ENCODE measurements at regions of chr19 and their contacts with region 1.

Region 1: GRCh38 chr19:5048091-5048726 is 79.3 kb downstream of the KDM4B start:
- DNase-seq: peak; percentile 96
- H3K4me3 ChIP-seq: peak overlapping the region in 1 of 2 experiments; percentile 48; a peak in 1 of 4 replicates
- H3K27ac ChIP-seq: peak overlapping the region in 1 of 2 experiments; percentile 56; a peak in 3 of 4 replicates
- H3K4me1 ChIP-seq: peaks cover 12 to 42% of the 10 kb centered on the region in 2 experiments; a peak in 3 of 4 replicates
- H3K27me3 ChIP-seq: no peaks in the 10 kb centered on the region
- CTCF ChIP-seq: peak; percentile 90
- EP300 ChIP-seq: no peak
- RAD21 ChIP-seq: peak; percentile 97

Region 2: GRCh38 chr19:4909897-4910593 is 138.2 kb before region 1 on chr19:
- CTCF ChIA-PET with region 1: no interaction called
- POLR2A ChIA-PET with region 1: no interaction called
- DNase-seq: peak; percentile 99
- H3K4me3 ChIP-seq: peak overlapping the region; percentile 62 to 82
- H3K27ac ChIP-seq: peak overlapping the region; percentile 81 to 84
- H3K4me1 ChIP-seq: peaks cover 27 to 31% of the 10 kb centered on the region in 2 experiments; a peak in 3 of 4 replicates
- H3K27me3 ChIP-seq: no peaks in the 10 kb centered on the region
- CTCF ChIP-seq: no peak
- EP300 ChIP-seq: no peak
- RAD21 ChIP-seq: no peak

Region 3: GRCh38 chr19:5086725-5087439 is 38.7 kb after region 1 on chr19:
- CTCF ChIA-PET with region 1: interaction called, 24 read pairs
- POLR2A ChIA-PET with region 1: no interaction called
- DNase-seq: peak; percentile 58
- H3K4me3 ChIP-seq: no peak overlapping the region
- H3K27ac ChIP-seq: peak overlapping the region in 1 of 2 experiments; percentile 34; a peak in 1 of 4 replicates
- H3K4me1 ChIP-seq: peaks cover under 1 to 32% of the 10 kb centered on the region in 2 experiments; a peak in 1 of 4 replicates
- H3K27me3 ChIP-seq: no peaks in the 10 kb centered on the region
- CTCF ChIP-seq: no peak
- EP300 ChIP-seq: no peak
- RAD21 ChIP-seq: no peak

Region 4: GRCh38 chr19:5103061-5103701 is 55.0 kb after region 1 on chr19:
- CTCF ChIA-PET with region 1: interaction called, 24 read pairs
- POLR2A ChIA-PET with region 1: no interaction called
- DNase-seq: peak; percentile 94
- H3K4me3 ChIP-seq: no peak overlapping the region
- H3K27ac ChIP-seq: peak overlapping the region in 1 of 2 experiments; percentile 85; a peak in 2 of 4 replicates
- H3K4me1 ChIP-seq: peaks cover 14 to 57% of the 10 kb centered on the region in 2 experiments
- H3K27me3 ChIP-seq: no peaks in the 10 kb centered on the region
- CTCF ChIP-seq: no peak
- EP300 ChIP-seq: peak in 1 of 2 experiments; percentile 76; a peak in 2 of 4 replicates
- RAD21 ChIP-seq: peak; percentile 40

Region 5: DNA sequence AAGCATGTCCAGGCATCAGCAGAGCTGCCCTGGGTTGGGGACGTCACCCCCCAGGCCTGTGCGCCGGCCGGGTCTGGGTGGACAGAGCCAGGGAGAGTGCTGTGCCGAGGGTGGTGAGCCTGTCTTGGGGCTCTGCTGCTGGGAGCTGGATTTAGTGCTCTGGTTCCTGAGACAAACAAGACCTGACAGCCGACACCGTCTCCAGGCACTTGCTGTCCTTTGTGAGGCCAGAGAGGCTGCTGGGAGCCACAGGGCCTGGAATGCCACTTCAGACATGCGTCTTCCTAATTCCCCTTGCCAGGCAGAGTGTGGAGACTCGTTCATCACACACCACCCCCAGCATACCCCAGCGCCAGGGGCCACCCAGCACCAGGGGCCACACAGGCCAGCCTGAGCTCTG is 86.5 kb after region 1 on chr19:
- CTCF ChIA-PET with region 1: interaction called, 10 read pairs
- POLR2A ChIA-PET with region 1: no interaction called
- DNase-seq: no peak
- H3K4me3 ChIP-seq: no peak overlapping the region
- H3K27ac ChIP-seq: no peak overlapping the region
- H3K4me1 ChIP-seq: peaks cover 0 to 2% of the 10 kb centered on the region in 2 experiments; a peak in 1 of 4 replicates
- H3K27me3 ChIP-seq: no peaks in the 10 kb centered on the region
- CTCF ChIP-seq: no peak
- EP300 ChIP-seq: no peak
- RAD21 ChIP-seq: no peak

Region 6: GRCh38 chr19:5154129-5154798 is 106.1 kb after region 1 on chr19:
- CTCF ChIA-PET with region 1: interaction called, 42 read pairs
- POLR2A ChIA-PET with region 1: no interaction called
- DNase-seq: peak; percentile 82
- H3K4me3 ChIP-seq: no peak overlapping the region
- H3K27ac ChIP-seq: no peak overlapping the region
- H3K4me1 ChIP-seq: peaks cover 0 to 2% of the 10 kb centered on the region in 2 experiments; a peak in 1 of 4 replicates
- H3K27me3 ChIP-seq: no peaks in the 10 kb centered on the region
- CTCF ChIP-seq: peak; percentile 56
- EP300 ChIP-seq: no peak
- RAD21 ChIP-seq: peak; percentile 43

Region 7: GRCh38 chr19:5170329-5170745 is 122.1 kb after region 1 on chr19:
- CTCF ChIA-PET with region 1: interaction called, 15 read pairs
- POLR2A ChIA-PET with region 1: no interaction called
- DNase-seq: peak; percentile 58
- H3K4me3 ChIP-seq: no peak overlapping the region; a peak in 1 of 4 replicates
- H3K27ac ChIP-seq: no peak overlapping the region
- H3K4me1 ChIP-seq: peaks cover 0 to 3% of the 10 kb centered on the region in 2 experiments; a peak in 1 of 4 replicates
- H3K27me3 ChIP-seq: no peaks in the 10 kb centered on the region
- CTCF ChIP-seq: peak; percentile 63
- EP300 ChIP-seq: no peak
- RAD21 ChIP-seq: 0 out of 2 replicates have a peak, but pooled peaks have one; percentile 15

Region 8: DNA sequence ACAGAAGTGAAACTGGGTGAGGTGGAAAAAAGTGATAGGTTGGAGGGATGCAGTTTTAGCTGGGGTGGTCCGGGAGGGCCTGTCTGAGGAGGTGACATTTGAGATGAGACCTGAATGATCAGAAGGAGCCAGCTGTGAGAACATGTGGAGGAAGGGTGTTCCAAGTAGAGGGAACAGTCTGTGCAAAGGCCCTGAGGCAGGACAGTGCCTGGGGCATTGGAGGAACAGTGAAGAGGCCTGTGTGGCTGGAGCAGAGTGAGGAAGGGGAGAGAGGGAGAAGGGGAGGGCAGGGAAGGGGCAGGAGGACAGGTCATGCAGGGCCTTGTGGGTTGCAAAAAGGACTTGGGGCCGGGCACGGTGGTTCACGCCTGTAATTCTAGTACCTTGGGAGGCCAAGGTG is 328.7 kb after region 1 on chr19:
- CTCF ChIA-PET with region 1: interaction called, 14 read pairs
- POLR2A ChIA-PET with region 1: no interaction called
- DNase-seq: no peak
- H3K4me3 ChIP-seq: no peak overlapping the region
- H3K27ac ChIP-seq: no peak overlapping the region
- H3K4me1 ChIP-seq: no peaks in the 10 kb centered on the region
- H3K27me3 ChIP-seq: peaks cover 1% of the 10 kb centered on the region; the same call in 1 of the 2 replicates
- CTCF ChIP-seq: no peak
- EP300 ChIP-seq: no peak
- RAD21 ChIP-seq: no peak